Gastrocnemius medialis (tissue), 4 donors: ENCODE measurements at regions of chr3 and their contacts with region 1.

Region 1: DNA sequence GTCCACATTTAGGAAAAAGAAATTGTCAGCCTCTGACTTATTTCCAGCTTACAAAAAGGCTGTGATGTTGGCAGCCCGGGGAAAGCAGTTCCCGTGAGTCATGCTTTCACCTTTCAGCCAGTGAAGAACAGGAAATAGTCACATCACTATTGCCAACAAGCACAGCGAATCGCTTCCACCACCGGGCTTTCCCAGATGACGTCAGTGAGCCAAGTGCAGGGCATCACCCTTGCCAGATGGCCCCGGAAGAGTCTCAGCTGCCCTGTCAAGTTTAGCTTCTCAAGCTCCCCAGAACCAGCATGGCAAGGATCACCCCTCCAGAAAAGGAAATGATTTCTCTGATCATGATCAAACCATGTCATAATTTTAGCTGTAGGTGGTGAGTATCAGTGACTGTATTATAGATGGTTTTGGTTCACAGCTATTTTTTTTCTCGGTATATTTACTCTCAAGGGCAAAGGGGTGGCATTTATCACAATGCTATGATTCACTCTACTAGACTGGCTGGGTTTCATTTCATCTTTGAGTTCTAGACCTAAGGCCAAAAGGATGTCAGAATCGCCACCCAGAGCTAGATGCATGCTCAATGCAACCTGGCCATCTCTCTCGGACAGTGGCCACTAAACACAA is 32.9 kb downstream of the B3GNT5 start:
- DNase-seq: peak; percentile 82 to 93
- ATAC-seq: peak; percentile 70
- H3K4me3 ChIP-seq: peak overlapping the region; percentile 12 to 28 (median 16)
- H3K27ac ChIP-seq: peak overlapping the region; percentile 89 to 99 (median 94)
- H3K4me1 ChIP-seq: peaks cover 38 to 40% of the 10 kb centered on the region in 2 donors
- H3K27me3 ChIP-seq: no peaks in the 10 kb centered on the region
- CTCF ChIP-seq: no peak
- POLR2A ChIP-seq: peak; percentile 24 to 49

Region 2: DNA sequence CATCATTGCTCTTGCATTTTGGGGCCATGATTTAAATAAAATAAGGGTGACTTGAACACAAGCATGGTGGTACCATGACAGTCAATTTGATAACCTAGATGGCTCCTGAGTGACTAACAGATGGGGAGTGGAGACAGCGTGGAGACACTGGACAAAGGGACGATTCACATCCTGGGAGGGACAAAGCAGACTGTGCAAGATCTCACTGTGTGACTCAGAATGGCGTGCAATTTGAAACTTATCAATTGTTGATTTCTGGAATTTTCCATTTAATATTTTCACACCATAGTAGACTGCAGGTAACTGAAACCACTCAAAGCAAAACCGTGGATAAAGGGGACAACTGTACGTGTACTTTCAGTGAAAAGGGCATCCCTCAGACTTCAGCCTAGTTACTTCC is 212.1 kb before region 1 on chr3:
- in situ Hi-C with region 1: no loop called
- intact Hi-C with region 1: no loop called
- DNase-seq: no peak
- ATAC-seq: no peak
- H3K4me3 ChIP-seq: no peak overlapping the region
- H3K27ac ChIP-seq: no peak overlapping the region
- H3K4me1 ChIP-seq: no peaks in the 10 kb centered on the region
- H3K27me3 ChIP-seq: no peaks in the 10 kb centered on the region
- CTCF ChIP-seq: no peak
- POLR2A ChIP-seq: no peak

Region 3: GRCh38 chr3:183210839-183211341 is 75.1 kb before region 1 on chr3:
- in situ Hi-C with region 1: no loop called
- intact Hi-C with region 1: loop called (anchors 2 kb)
- DNase-seq: peak in 1 of 2 donors; percentile 18
- ATAC-seq: peak in 1 of 2 donors; percentile 37
- H3K4me3 ChIP-seq: no peak overlapping the region
- H3K27ac ChIP-seq: peak overlapping the region in 3 of 4 donors; percentile 43 to 57 (median 54)
- H3K4me1 ChIP-seq: peaks cover 0 to 3% of the 10 kb centered on the region in 2 donors
- H3K27me3 ChIP-seq: no peaks in the 10 kb centered on the region
- CTCF ChIP-seq: no peak
- POLR2A ChIP-seq: no peak

Region 4: GRCh38 chr3:183244981-183245476 is 40.9 kb before region 1 on chr3:
- in situ Hi-C with region 1: no loop called
- intact Hi-C with region 1: no loop called
- DNase-seq: no peak
- ATAC-seq: no peak
- H3K4me3 ChIP-seq: no peak overlapping the region
- H3K27ac ChIP-seq: no peak overlapping the region
- H3K4me1 ChIP-seq: no peaks in the 10 kb centered on the region
- H3K27me3 ChIP-seq: no peaks in the 10 kb centered on the region
- CTCF ChIP-seq: no peak
- POLR2A ChIP-seq: no peak

Region 5: DNA sequence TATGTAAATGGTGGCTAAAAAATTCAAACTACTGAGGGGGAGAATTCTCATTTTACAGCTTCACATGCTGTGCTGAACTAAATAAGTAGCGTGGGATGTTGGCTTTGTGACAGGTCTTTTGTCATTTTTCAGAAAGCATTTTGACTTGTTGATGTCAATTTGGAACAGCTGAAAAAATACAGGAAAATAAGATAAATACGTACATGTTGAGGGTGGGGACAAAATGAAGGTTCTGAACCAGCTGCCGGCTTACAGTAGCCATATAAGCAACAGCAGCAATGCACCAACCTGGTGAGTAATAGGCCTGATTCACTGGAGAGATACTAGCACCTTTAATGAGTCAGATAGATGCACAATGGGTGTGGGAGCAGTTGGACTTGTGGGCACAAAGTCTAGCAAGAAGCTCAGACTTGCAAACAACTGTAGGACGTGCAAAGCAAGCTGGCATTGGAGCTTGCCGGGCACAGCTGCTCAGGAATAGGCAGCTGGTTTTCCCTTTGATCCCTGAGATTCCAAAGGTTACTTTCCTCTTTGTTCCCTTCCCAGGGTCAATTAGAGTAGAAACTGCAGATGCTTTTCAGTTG is 20.0 kb before region 1 on chr3:
- in situ Hi-C with region 1: no loop called
- intact Hi-C with region 1: loop called (anchors 2 kb)
- DNase-seq: peak in 1 of 2 donors; percentile 57
- ATAC-seq: peak; percentile 83 to 92
- H3K4me3 ChIP-seq: no peak overlapping the region
- H3K27ac ChIP-seq: peak overlapping the region; percentile 56 to 72 (median 64)
- H3K4me1 ChIP-seq: peaks cover 35 to 53% of the 10 kb centered on the region in 2 donors
- H3K27me3 ChIP-seq: no peaks in the 10 kb centered on the region
- CTCF ChIP-seq: no peak
- POLR2A ChIP-seq: no peak

Region 6: DNA sequence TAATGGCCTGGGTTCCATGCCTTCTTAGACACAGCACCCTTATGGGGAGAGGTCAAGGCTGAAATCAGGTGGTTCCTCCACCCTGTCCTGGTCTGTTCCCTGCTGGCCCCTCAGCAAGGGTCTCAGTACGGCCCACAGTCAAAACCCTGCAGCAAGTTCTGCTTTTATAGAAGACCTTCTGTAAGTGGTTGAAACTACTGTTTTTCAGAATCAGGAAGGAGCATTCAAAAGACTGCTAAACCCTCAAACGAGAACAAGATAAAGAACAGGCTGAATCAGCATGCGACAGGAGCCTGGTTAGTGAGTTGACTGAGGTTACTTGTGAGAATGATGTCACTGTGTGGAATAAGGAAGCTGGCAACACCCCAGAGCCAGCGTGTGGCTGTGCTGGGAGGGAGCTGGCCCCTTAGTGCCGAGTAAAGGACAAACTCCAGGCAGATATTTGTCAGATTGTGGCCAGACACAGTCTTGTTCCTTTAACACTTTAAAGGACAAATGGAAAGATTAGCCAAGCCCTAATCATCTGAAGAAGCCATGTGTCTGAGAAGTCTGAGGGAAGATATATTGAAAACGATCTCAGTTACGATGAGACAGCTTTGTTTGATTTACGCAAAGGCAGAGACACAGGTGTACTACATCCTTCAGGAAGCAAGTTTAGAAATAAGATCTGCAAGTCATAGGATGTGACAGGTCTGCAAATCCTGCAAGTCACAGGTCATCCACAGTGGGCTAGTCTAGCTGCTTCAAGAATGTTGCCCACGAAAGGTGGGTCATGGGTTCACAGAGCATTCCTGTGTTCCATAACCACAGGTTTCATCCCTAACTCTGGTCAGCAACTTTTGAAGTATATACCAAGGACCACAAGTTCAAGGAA is 21.1 kb after region 1 on chr3:
- in situ Hi-C with region 1: no loop called
- intact Hi-C with region 1: loop called (anchors 1 kb)
- DNase-seq: peak; percentile 71 to 90
- ATAC-seq: peak; percentile 76
- H3K4me3 ChIP-seq: peak overlapping the region in 1 of 4 donors; percentile 21
- H3K27ac ChIP-seq: peak overlapping the region; percentile 89 to 99 (median 93)
- H3K4me1 ChIP-seq: peaks cover 49 to 67% of the 10 kb centered on the region in 2 donors
- H3K27me3 ChIP-seq: no peaks in the 10 kb centered on the region
- CTCF ChIP-seq: no peak
- POLR2A ChIP-seq: peak; percentile 9 to 53

Region 7: GRCh38 chr3:183988216-183988790 is 702.4 kb after region 1 on chr3:
- in situ Hi-C with region 1: no loop called
- intact Hi-C with region 1: loop called (anchors 10 kb)
- DNase-seq: peak in 1 of 2 donors; percentile 45
- ATAC-seq: peak; percentile 38 to 66
- H3K4me3 ChIP-seq: no peak overlapping the region
- H3K27ac ChIP-seq: peak overlapping the region; percentile 75 to 89 (median 84)
- H3K4me1 ChIP-seq: peaks cover 37 to 38% of the 10 kb centered on the region in 2 donors
- H3K27me3 ChIP-seq: no peaks in the 10 kb centered on the region
- CTCF ChIP-seq: no peak
- POLR2A ChIP-seq: no peak